ENCODE measurements at regions of chr5 and their contacts with region 1.

Region 1: GRCh38 chr5:73540192-73540591 is 25.2 kb downstream of the ANKRA2 start:
- DNase-seq: peak; percentile 50 to 93
- H3K4me3 ChIP-seq: no peak overlapping the region
- H3K27ac ChIP-seq: peak overlapping the region; percentile 83
- H3K4me1 ChIP-seq: peaks cover 37% of the 10 kb centered on the region
- H3K27me3 ChIP-seq: no peaks in the 10 kb centered on the region
- CTCF ChIP-seq: no peak

Region 2: DNA sequence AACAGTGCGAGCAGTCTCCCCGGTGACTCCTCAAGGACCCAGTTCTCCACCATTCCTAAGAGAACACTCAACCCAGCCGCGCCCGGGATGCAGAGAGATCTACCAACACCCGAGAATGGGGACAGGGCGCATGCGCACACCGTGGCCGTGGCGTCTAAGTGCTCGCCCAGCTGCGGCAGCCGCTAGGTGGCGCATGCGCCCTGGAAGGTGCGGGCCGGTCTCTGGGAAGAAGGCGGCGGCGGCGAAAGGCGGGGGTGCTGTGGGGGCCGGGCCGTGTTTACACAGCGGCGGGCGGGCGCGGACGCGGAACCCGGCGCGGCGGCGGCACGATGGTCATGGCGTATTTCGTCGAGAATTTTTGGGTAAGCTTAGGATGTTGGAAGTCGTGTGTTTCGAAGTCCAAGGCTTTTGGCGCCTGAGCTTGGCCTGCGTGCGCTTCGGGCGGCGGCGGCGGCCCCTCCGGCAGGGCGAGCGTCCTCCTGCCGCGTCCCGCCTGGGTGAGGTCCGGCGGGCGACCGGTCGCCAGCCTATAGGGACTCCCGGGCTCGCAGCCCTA is 584.3 kb before region 1 on chr5 and contains the start of gene FCHO2:
- CTCF ChIA-PET with region 1: no interaction called
- POLR2A ChIA-PET with region 1: no interaction called
- intact Hi-C with region 1: loop called (anchors 10 kb)
- DNase-seq: peak; percentile 95 to 97
- H3K4me3 ChIP-seq: peak within 1 kb of the TSS; percentile 74
- H3K27ac ChIP-seq: peak within 1 kb of the TSS; percentile 99
- H3K4me1 ChIP-seq: peaks cover 58% of the 10 kb centered on the region
- H3K27me3 ChIP-seq: no peaks in the 10 kb centered on the region
- CTCF ChIP-seq: peak; percentile 84
- total RNA-seq, gene FCHO2: 13.6 and 26.1 TPM in 2 replicates

Region 3: GRCh38 chr5:73031839-73032238 is 508.4 kb before region 1 on chr5:
- CTCF ChIA-PET with region 1: no interaction called
- POLR2A ChIA-PET with region 1: interaction called, 11 read pairs
- intact Hi-C with region 1: no loop called
- DNase-seq: no peak
- H3K4me3 ChIP-seq: no peak overlapping the region
- H3K27ac ChIP-seq: peak overlapping the region; percentile 90
- H3K4me1 ChIP-seq: peaks cover 32% of the 10 kb centered on the region
- H3K27me3 ChIP-seq: no peaks in the 10 kb centered on the region
- CTCF ChIP-seq: no peak

Region 4: GRCh38 chr5:73229209-73229661 is 311.0 kb before region 1 on chr5:
- CTCF ChIA-PET with region 1: no interaction called
- POLR2A ChIA-PET with region 1: interaction called, 16 read pairs
- intact Hi-C with region 1: no loop called
- DNase-seq: peak; percentile 41 to 77
- H3K4me3 ChIP-seq: no peak overlapping the region
- H3K27ac ChIP-seq: 0 out of 2 replicates have a peak overlapping the region, but pooled peaks have one; percentile 4
- H3K4me1 ChIP-seq: peaks cover 15% of the 10 kb centered on the region
- H3K27me3 ChIP-seq: no peaks in the 10 kb centered on the region
- CTCF ChIP-seq: no peak

Region 5: GRCh38 chr5:73471654-73472053 is 68.5 kb before region 1 on chr5:
- CTCF ChIA-PET with region 1: no interaction called
- POLR2A ChIA-PET with region 1: no interaction called
- intact Hi-C with region 1: no loop called
- DNase-seq: no peak
- H3K4me3 ChIP-seq: no peak overlapping the region
- H3K27ac ChIP-seq: no peak overlapping the region
- H3K4me1 ChIP-seq: no peaks in the 10 kb centered on the region
- H3K27me3 ChIP-seq: no peaks in the 10 kb centered on the region
- CTCF ChIP-seq: no peak

Region 6: GRCh38 chr5:73519531-73520283 is 20.5 kb before region 1 on chr5:
- CTCF ChIA-PET with region 1: interaction called, 4 read pairs
- POLR2A ChIA-PET with region 1: no interaction called
- intact Hi-C with region 1: loop called (anchors 1 kb)
- DNase-seq: peak; percentile 58 to 64
- H3K4me3 ChIP-seq: no peak overlapping the region
- H3K27ac ChIP-seq: no peak overlapping the region
- H3K4me1 ChIP-seq: peaks cover 18% of the 10 kb centered on the region
- H3K27me3 ChIP-seq: no peaks in the 10 kb centered on the region
- CTCF ChIP-seq: peak; percentile 80

Region 7: GRCh38 chr5:73565139-73565968 is 25.2 kb after region 1 on chr5 and contains the starts of genes ANKRA2 and UTP15:
- CTCF ChIA-PET with region 1: interaction called, 6 read pairs
- POLR2A ChIA-PET with region 1: no interaction called
- intact Hi-C with region 1: loop called (anchors 2 kb)
- DNase-seq: peak; percentile 90 to 96
- H3K4me3 ChIP-seq: peak within 1 kb of the TSS; percentile 90
- H3K27ac ChIP-seq: peak within 1 kb of the TSS; percentile 20
- H3K4me1 ChIP-seq: peaks cover 23% of the 10 kb centered on the region
- H3K27me3 ChIP-seq: no peaks in the 10 kb centered on the region
- CTCF ChIP-seq: no peak
- total RNA-seq, gene ANKRA2: 12.9 and 15.5 TPM in 2 replicates
- total RNA-seq, gene UTP15: 15.1 and 19.4 TPM in 2 replicates

Measured in PC-9 (cell line).